ENCODE measurements at regions of chrX and their contacts with region 1.

Region 1: DNA sequence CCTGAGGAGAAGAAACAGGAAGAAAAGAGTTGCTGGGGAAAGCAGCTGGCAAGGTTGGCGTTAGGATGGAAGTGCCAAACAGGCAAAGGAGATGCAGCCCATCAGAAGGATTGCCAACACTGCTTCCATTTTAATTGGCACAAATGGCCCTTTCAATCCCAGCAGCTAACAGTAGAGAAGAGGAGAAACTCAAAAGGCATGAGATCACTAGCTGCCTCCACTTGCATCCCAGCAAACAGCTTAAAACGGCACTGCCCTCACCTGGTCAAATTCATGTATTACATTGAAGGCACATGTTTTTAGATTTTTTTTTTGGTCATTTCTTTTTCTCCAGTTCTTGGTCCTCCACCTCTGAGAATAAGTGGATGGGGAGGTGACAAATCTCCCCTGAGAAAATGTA is 14.9 kb upstream of the LOC101059915 start:
- DNase-seq: no peak
- ATAC-seq: no peak

Region 2: GRCh38 chrX:71565474-71566041 is 86.8 kb before region 1 on chrX:
- intact Hi-C with region 1: no loop called
- DNase-seq: no peak
- ATAC-seq: no peak

Region 3: GRCh38 chrX:71579136-71579989 is 73.0 kb before region 1 on chrX:
- intact Hi-C with region 1: loop called (anchors 5 kb)
- DNase-seq: no peak
- ATAC-seq: no peak